ENCODE measurements at regions of chr10 and their contacts with region 1.

Region 1: GRCh38 chr10:93288654-93289634 is 193.2 kb downstream of the MYOF start:
- DNase-seq: peak; percentile 89
- H3K4me3 ChIP-seq: no peak overlapping the region
- CTCF ChIP-seq: peak; percentile 73

Region 2: DNA sequence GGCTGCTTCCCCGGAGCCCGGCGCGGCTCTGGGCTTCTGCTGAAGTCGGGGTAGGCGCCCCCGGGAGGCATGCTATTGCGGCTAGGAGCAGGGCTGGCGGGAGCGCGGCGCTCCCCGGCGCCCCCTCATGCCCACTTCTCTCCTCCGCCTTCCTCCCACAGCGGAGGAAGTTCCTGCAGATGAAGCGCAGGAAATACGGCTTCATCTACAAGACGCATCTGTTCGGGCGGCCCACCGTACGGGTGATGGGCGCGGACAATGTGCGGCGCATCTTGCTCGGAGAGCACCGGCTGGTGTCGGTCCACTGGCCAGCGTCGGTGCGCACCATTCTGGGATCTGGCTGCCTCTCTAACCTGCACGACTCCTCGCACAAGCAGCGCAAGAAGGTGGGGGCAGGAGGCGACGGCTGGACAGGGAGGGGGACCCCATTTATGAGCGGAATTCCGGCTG is 214.8 kb before region 1 on chr10:
- CTCF ChIA-PET with region 1: interaction called, 85 read pairs
- POLR2A ChIA-PET with region 1: no interaction called
- DNase-seq: no peak
- H3K4me3 ChIP-seq: peak overlapping the region; percentile 15; the same call in 1 of the 2 replicates
- CTCF ChIP-seq: no peak

Region 3: GRCh38 chr10:93299606-93300287 is 10.8 kb after region 1 on chr10:
- CTCF ChIA-PET with region 1: interaction called, 12 read pairs
- POLR2A ChIA-PET with region 1: no interaction called
- DNase-seq: peak; percentile 37
- H3K4me3 ChIP-seq: peak overlapping the region; percentile 23
- CTCF ChIP-seq: no peak

Measured in AG04449 (cell line).